HCT116 (cell line): ENCODE measurements at regions of chr15 and their contacts with region 1.

Region 1: GRCh38 chr15:64046347-64047153 is at the start of gene DAPK2:
- DNase-seq: peak; percentile 21
- ATAC-seq: peak; percentile 96
- H3K4me3 ChIP-seq: peak within 1 kb of the TSS; percentile 41 to 58
- H3K27ac ChIP-seq: peak within 1 kb of the TSS; percentile 39; the same call in 1 of the 2 replicates
- H3K4me1 ChIP-seq: peaks cover 5 to 14% of the 10 kb centered on the region in 2 experiments; a peak in 2 of 4 replicates
- H3K27me3 ChIP-seq: no peaks in the 10 kb centered on the region
- CTCF ChIP-seq: peak; percentile 54 to 73 (median 62); a peak in 5 of 6 replicates
- POLR2A ChIP-seq: no peak
- RAD21 ChIP-seq: peak; percentile 61
- total RNA-seq, gene DAPK2: 4.8 TPM

Region 2: GRCh38 chr15:63610200-63610841 is 436.2 kb before region 1 on chr15:
- CTCF ChIA-PET with region 1: interaction called, 17 read pairs
- POLR2A ChIA-PET with region 1: no interaction called
- RAD21 ChIA-PET with region 1: interaction called in 1 of 2 experiments, 3 read pairs
- intact Hi-C with region 1: no loop called
- DNase-seq: peak; percentile 69
- ATAC-seq: peak; percentile 98
- H3K4me3 ChIP-seq: no peak overlapping the region
- H3K27ac ChIP-seq: no peak overlapping the region
- H3K4me1 ChIP-seq: peaks cover 0 to 4% of the 10 kb centered on the region in 2 experiments; a peak in 1 of 4 replicates
- H3K27me3 ChIP-seq: no peaks in the 10 kb centered on the region
- CTCF ChIP-seq: peak; percentile 77 to 82 (median 80)
- POLR2A ChIP-seq: no peak
- RAD21 ChIP-seq: peak; percentile 90

Region 3: DNA sequence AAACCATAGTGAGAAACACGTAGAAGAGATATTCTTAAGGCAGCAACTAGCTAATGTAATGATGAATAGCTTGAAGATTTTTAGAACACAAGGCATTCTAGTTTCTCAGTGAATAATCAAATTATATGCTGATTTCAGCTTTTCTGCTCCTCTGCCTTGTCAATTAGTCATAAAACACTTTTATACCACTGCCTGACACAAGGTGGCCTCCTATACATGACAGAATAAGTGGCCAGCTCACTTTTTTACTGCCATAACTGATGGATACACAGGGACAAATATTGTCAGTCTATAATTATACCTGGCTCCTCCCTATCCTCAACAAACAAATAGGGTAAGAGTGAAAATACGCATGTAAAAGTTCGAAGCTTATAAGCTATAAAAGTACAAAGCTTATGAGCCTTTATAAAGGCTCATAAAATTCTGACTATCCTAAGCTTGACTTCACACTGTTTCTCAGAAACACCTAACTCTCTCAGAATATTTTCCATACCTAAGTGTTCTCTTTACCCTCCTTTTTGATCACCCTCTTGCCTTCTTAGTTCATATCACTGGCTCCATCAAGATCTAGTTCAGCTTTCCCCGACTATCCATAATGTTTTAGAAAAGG is 294.4 kb before region 1 on chr15:
- CTCF ChIA-PET with region 1: interaction called, 29 read pairs
- POLR2A ChIA-PET with region 1: no interaction called
- RAD21 ChIA-PET with region 1: interaction called, 4 read pairs
- intact Hi-C with region 1: loop called (anchors 5 kb)
- DNase-seq: peak; percentile 60
- ATAC-seq: peak; percentile 93
- H3K4me3 ChIP-seq: no peak overlapping the region
- H3K27ac ChIP-seq: no peak overlapping the region
- H3K4me1 ChIP-seq: no peaks in the 10 kb centered on the region
- H3K27me3 ChIP-seq: no peaks in the 10 kb centered on the region
- CTCF ChIP-seq: peak; percentile 66 to 82 (median 72)
- POLR2A ChIP-seq: no peak
- RAD21 ChIP-seq: peak; percentile 87

Region 4: DNA sequence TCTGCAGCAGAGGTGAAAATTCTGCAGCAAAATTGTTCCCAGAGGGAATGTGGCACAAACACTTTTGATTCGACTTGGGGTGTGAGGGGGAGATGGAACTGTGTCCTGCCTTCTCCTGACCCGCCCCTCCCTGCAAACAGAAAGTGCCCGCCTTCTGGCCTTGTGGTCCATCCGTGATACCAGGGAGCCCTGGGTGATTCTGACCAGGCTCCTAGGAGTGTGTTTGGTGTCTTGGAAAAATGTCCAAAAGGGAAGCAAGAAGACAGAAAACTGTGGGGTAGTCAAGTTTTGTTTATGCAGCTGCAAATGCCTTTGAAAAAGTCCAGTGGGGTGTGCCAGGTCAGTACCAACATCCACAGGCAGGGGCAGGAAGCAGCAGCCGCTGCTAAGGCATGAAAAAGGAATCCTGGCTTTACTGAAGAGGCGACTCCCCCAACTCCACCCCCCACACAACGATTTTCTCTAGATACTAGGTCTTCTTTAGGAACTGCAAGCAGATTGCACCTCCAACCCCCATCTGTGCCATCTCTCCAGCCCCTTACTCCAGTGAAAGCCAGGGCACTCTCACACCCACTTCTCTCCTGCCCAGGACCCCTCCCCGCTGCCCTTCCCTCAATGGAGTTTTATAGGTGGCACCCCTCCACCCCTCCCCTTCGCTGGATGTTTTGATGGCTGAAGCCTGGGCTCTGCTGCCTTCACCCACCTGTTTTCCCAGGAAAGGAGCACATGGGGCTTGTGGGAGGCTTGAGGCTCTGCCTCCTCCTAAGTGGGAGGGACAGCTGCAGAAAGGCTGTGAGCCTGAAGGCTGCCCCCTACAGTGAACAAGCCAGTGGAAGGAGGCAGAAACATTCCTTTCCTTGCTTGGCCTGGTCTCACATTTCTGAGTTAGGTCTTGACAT is 130.4 kb before region 1 on chr15:
- CTCF ChIA-PET with region 1: no interaction called
- POLR2A ChIA-PET with region 1: no interaction called
- RAD21 ChIA-PET with region 1: no interaction called
- intact Hi-C with region 1: loop called (anchors 10 kb)
- DNase-seq: no peak
- ATAC-seq: peak; percentile 89
- H3K4me3 ChIP-seq: no peak overlapping the region
- H3K27ac ChIP-seq: no peak overlapping the region
- H3K4me1 ChIP-seq: peaks cover 13% of the 10 kb centered on the region in 2 experiments; a peak in 3 of 4 replicates
- H3K27me3 ChIP-seq: no peaks in the 10 kb centered on the region
- CTCF ChIP-seq: peak in 2 of 3 experiments; percentile 2 to 32; a peak in 3 of 6 replicates
- POLR2A ChIP-seq: no peak
- RAD21 ChIP-seq: no peak

Region 5: DNA sequence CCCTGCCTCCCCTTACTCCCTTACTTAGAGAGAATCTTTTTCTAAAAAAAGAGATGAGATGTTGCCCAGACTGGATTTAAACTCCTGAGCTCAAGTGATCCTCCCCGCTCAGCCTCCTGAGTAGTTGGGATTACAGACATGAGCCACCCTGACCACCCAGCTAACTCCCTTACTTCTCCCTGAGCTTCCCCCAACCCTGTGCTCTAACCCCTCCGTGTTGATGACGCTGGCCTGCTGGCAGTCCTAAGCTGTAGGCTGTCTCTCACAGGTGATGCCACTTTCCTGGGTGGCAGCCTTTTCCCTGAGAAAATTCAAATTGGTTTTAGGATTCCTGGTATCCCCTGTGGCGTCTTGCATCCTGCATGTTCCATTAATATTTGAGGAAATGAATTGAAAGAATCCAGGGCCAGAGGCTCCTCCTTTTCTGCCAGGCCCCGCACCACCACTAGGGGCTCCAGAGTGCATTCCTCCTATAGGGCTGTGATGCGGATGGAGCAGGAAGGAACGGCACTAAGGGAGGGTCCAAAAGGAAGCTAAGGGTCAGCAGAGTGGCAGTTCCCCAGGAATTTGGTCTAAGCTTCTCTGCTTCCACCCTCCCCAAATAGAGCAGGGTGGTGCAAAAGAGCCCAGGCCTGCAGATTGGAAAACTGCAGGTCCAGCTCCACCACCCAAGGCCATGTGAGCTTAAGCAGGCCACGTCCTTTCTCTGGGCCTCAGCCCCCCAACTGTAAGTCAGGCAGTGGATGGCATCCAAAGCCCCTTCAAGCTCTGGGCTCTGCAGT is 101.4 kb before region 1 on chr15:
- CTCF ChIA-PET with region 1: interaction called, 13 read pairs
- POLR2A ChIA-PET with region 1: no interaction called
- RAD21 ChIA-PET with region 1: no interaction called
- intact Hi-C with region 1: loop called (anchors 1 kb)
- DNase-seq: peak; percentile 24
- ATAC-seq: peak; percentile 99
- H3K4me3 ChIP-seq: no peak overlapping the region
- H3K27ac ChIP-seq: no peak overlapping the region
- H3K4me1 ChIP-seq: peaks cover 0 to 6% of the 10 kb centered on the region in 2 experiments; a peak in 1 of 4 replicates
- H3K27me3 ChIP-seq: no peaks in the 10 kb centered on the region
- CTCF ChIP-seq: peak; percentile 60 to 99 (median 97); a peak in 5 of 6 replicates
- POLR2A ChIP-seq: no peak
- RAD21 ChIP-seq: peak; percentile 56